ENCODE measurements at regions of chr1 and their contacts with region 1.

Region 1: DNA sequence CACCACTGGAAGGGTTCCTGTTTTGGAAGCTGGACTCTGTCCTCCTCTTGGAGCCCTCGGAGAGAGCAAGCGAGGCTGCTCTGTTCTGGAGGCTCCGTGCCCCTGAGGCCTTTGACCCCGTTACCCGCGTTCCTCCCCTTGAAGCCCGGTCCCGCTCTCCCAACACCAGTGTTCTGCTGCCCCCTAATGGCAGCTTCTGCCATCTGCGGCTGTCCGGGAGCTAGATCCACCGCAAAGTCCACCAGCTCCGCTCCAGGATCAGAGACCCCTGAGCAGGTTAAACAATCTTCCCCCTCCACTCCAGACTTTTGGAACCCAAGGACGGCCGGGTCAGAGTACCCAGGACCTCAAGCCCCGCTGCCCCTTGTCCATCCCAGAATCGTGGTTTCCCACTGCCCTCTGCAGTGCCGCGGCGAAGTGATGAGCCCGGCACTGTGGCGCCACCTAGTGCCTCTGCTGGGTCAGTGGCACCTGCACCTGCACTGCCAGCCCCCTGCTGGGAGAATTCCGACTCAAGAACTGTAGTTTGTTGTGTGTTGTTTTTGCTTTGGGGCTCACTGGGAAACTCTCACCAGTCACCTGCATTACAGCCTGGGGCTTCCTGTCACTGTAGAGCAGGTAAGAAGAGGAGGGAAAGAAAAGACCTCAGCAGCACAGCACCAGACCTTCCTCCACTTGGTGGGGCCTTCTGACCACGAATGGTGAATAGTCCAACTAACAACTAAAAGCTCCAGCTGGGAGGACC is 63.5 kb upstream of the NFASC start:
- DNase-seq: peak; percentile 43
- ATAC-seq: peak; percentile 98
- H3K4me3 ChIP-seq: peak overlapping the region; percentile 49; the same call in 1 of the 2 replicates
- H3K27ac ChIP-seq: no peak overlapping the region
- H3K4me1 ChIP-seq: no peaks in the 10 kb centered on the region
- H3K27me3 ChIP-seq: peaks cover 0 to 6% of the 10 kb centered on the region in 2 experiments; a peak in 2 of 4 replicates
- CTCF ChIP-seq: peak; percentile 82 to 98 (median 93)
- EP300 ChIP-seq: no peak
- POLR2A ChIP-seq: no peak
- RAD21 ChIP-seq: peak; percentile 82

Region 2: DNA sequence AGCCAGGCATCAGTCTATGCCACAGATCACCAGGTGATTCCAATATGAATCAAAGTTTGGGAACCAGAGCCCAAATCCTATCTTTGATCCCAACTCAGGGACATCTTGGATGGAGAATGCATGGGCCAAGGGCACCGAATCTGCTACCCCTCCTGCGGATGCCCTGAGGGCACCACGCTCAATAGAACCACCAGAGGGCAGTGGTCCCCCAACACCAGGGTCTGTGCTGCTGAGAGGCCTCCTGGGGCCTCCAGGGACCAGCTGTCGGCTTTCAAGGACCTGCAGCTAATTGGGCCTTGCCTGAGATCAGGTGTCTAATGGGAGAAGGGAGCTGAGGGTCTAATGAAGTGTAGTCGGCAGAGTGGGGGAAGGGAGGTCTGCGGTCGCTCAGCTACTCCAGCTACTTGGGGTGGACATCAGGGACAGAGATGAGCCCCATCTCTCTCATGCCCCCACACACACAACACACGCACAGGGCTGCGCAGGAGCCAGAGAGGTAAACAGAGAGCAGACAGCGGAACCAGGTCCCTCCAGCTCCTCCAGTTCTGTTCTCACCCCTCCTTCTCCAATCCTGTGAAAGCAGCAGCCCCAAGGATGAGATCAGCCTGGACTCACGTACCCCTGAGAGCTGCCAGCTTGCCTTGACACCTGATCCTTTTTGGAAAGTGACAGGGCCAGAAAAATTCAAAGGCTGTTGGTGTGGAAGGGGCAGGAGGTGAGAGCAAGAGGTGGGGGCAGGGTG is 360.6 kb before region 1 on chr1:
- CTCF ChIA-PET with region 1: interaction called, 12 read pairs
- POLR2A ChIA-PET with region 1: no interaction called
- RAD21 ChIA-PET with region 1: interaction called, 22 read pairs
- SMC1A ChIA-PET with region 1: interaction called, 12 read pairs
- in situ Hi-C with region 1: no loop called
- intact Hi-C with region 1: loop called (anchors 10 kb)
- DNase-seq: no peak
- ATAC-seq: peak; percentile 98
- H3K4me3 ChIP-seq: no peak overlapping the region
- H3K27ac ChIP-seq: no peak overlapping the region
- H3K4me1 ChIP-seq: peaks cover 5% of the 10 kb centered on the region
- H3K27me3 ChIP-seq: no peaks in the 10 kb centered on the region
- CTCF ChIP-seq: peak; percentile 80 to 92 (median 89); a peak in 5 of 6 replicates
- EP300 ChIP-seq: no peak
- POLR2A ChIP-seq: no peak
- RAD21 ChIP-seq: peak; percentile 99

Region 3: DNA sequence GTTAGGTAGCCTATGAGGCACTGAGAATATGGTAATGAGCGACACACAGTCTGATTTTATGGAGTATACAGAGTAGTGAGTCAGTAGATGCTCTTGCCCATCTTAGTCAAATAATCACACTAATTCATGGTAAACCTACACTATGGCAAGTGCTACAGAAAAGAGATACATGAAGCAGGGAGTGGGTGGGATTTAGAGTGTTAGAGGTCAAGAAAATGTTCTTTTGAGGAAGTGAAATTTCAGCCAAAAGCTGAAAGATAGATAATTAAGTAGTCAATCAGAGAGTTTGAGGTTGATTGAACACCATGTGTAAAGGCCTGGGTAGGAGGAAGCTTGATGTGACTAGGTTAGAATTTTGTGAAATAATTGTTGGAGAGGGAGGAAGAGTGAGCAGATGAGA is 276.2 kb before region 1 on chr1:
- CTCF ChIA-PET with region 1: interaction called, 14 read pairs
- POLR2A ChIA-PET with region 1: no interaction called
- RAD21 ChIA-PET with region 1: interaction called, 6 read pairs
- SMC1A ChIA-PET with region 1: interaction called, 5 read pairs
- in situ Hi-C with region 1: no loop called
- intact Hi-C with region 1: no loop called
- DNase-seq: peak; percentile 87
- ATAC-seq: peak; percentile 96
- H3K4me3 ChIP-seq: no peak overlapping the region
- H3K27ac ChIP-seq: peak overlapping the region; percentile 59
- H3K4me1 ChIP-seq: peaks cover 23% of the 10 kb centered on the region
- H3K27me3 ChIP-seq: no peaks in the 10 kb centered on the region
- CTCF ChIP-seq: no peak
- EP300 ChIP-seq: peak in 1 of 2 experiments; percentile 94; a peak in 2 of 4 replicates
- POLR2A ChIP-seq: no peak
- RAD21 ChIP-seq: no peak

Region 4: GRCh38 chr1:204598319-204598969 is 208.7 kb before region 1 on chr1:
- CTCF ChIA-PET with region 1: interaction called, 16 read pairs
- POLR2A ChIA-PET with region 1: no interaction called
- RAD21 ChIA-PET with region 1: interaction called, 3 read pairs
- SMC1A ChIA-PET with region 1: no interaction called
- in situ Hi-C with region 1: no loop called
- intact Hi-C with region 1: no loop called
- DNase-seq: no peak
- ATAC-seq: peak; percentile 68
- H3K4me3 ChIP-seq: no peak overlapping the region
- H3K27ac ChIP-seq: no peak overlapping the region
- H3K4me1 ChIP-seq: no peaks in the 10 kb centered on the region
- H3K27me3 ChIP-seq: no peaks in the 10 kb centered on the region
- CTCF ChIP-seq: no peak
- EP300 ChIP-seq: no peak
- POLR2A ChIP-seq: no peak
- RAD21 ChIP-seq: no peak

Region 5: DNA sequence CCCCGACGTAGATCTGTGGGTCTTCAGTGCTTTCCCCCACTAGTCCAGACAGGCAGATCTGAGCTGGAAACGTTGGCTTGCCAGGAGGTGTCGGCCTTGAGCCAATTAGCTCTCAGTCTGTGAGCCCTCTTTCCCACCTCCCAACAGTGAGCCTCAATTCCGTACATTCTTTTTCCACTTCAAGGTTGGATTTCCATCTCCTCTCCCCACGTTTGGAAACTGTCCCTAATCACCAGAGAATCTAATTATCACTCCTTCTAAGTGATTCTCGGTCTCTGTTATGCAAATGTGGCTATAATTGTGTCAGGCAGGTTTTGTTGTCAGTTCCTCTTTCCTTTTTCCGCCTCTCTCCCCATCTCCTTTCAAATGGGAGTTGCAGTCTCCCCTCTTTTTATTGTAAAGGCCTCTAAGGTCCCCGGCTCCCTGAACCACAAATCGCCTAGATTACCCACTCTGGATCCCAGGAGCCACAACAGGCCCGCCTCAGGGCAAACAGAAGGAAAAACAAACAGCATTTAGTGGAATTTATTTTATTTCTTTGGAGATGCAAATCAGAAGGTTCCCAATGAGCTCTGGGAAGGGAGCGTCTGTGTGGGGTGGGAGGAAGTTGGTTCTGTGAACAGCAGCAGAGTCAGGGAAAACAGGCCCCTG is 92.1 kb before region 1 on chr1:
- CTCF ChIA-PET with region 1: interaction called, 21 read pairs
- POLR2A ChIA-PET with region 1: no interaction called
- RAD21 ChIA-PET with region 1: interaction called, 11 read pairs
- SMC1A ChIA-PET with region 1: interaction called, 9 read pairs
- in situ Hi-C with region 1: no loop called
- intact Hi-C with region 1: loop called (anchors 5 kb)
- DNase-seq: peak; percentile 51
- ATAC-seq: peak; percentile 77
- H3K4me3 ChIP-seq: peak overlapping the region; percentile 26
- H3K27ac ChIP-seq: peak overlapping the region; percentile 45; the same call in 1 of the 2 replicates
- H3K4me1 ChIP-seq: peaks cover 10% of the 10 kb centered on the region
- H3K27me3 ChIP-seq: no peaks in the 10 kb centered on the region
- CTCF ChIP-seq: peak in 2 of 3 experiments; percentile 18 to 32; a peak in 1 of 6 replicates
- EP300 ChIP-seq: peak; percentile 18 to 40; a peak in 2 of 4 replicates
- POLR2A ChIP-seq: no peak
- RAD21 ChIP-seq: no peak

Region 6: GRCh38 chr1:204791453-204792353 is 15.4 kb before region 1 on chr1:
- CTCF ChIA-PET with region 1: interaction called, 130 read pairs
- POLR2A ChIA-PET with region 1: interaction called, 4 read pairs
- RAD21 ChIA-PET with region 1: interaction called, 22 read pairs
- SMC1A ChIA-PET with region 1: interaction called, 21 read pairs
- in situ Hi-C with region 1: no loop called
- intact Hi-C with region 1: loop called (anchors 2 kb)
- DNase-seq: no peak
- ATAC-seq: peak; percentile 96
- H3K4me3 ChIP-seq: no peak overlapping the region
- H3K27ac ChIP-seq: no peak overlapping the region
- H3K4me1 ChIP-seq: no peaks in the 10 kb centered on the region
- H3K27me3 ChIP-seq: peaks cover 3 to 4% of the 10 kb centered on the region in 2 experiments; a peak in 1 of 4 replicates
- CTCF ChIP-seq: peak; percentile 62 to 87 (median 87)
- EP300 ChIP-seq: no peak
- POLR2A ChIP-seq: no peak
- RAD21 ChIP-seq: no peak

Region 7: DNA sequence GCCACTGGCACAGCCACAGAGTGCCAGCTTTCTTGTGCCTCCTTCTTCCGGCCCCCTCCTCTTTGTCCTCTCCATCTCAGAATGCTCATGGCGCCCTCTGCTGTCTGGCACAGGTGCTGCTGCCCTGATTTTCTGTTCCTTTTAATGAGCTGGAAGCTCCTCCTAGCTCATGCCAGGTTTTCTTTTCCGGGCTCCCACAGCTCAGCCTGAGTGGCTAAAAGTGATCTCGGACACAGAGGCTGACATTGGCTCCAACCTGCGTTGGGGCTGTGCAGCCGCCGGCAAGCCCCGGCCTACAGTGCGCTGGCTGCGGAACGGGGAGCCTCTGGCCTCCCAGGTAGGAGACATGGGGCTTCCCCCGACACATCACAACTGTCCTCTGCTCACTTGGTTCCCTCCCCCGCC is 254.6 kb after region 1 on chr1:
- CTCF ChIA-PET with region 1: interaction called, 20 read pairs
- POLR2A ChIA-PET with region 1: no interaction called
- RAD21 ChIA-PET with region 1: interaction called, 8 read pairs
- SMC1A ChIA-PET with region 1: no interaction called
- in situ Hi-C with region 1: no loop called
- intact Hi-C with region 1: no loop called
- DNase-seq: peak; percentile 20
- ATAC-seq: peak; percentile 92
- H3K4me3 ChIP-seq: no peak overlapping the region
- H3K27ac ChIP-seq: no peak overlapping the region
- H3K4me1 ChIP-seq: no peaks in the 10 kb centered on the region
- H3K27me3 ChIP-seq: no peaks in the 10 kb centered on the region
- CTCF ChIP-seq: peak; percentile 84 to 93 (median 92); a peak in 5 of 6 replicates
- EP300 ChIP-seq: no peak
- POLR2A ChIP-seq: no peak
- RAD21 ChIP-seq: peak; percentile 75

Measured in GM12878 (cell line).